Esophagus muscularis mucosa (tissue), 4 donors: ENCODE measurements at regions of chr1 and their contacts with region 1.

Region 1: DNA sequence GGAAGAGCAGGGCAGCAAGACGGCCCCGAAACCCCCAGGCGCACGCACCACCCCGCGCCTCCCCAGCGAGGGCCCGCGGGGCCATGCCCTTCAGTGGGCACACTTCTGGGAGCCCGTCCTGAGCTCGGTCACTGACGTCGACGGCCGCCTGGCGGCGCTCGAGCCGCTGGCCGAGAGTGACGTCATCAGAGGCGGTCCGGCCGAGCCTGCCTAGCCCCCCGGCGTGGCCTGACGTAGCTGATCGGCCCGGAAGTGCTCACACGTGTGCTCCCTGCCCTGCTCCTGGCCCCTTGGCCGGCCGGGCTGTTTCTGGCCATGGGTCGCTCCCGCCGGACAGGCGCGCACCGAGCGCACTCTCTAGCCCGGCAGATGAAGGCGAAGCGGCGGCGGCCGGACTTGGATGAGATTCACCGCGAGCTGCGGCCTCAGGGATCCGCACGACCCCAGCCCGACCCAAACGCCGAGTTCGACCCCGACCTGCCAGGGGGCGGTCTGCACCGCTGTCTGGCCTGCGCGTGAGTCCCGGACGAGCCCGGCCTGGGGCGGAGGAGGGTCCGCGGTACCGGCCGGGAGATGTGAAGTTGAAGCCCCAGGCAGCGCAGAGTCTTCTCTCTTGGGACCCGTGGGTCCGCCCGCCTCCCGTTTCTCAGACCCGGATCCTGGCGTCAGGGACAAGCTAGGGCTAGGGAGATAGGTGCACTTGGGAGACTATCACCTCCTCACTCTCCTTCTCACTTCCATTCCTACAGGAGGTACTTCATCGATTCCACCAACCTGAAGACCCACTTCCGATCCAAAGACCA is at the start of gene ZNF593:
- DNase-seq: peak; percentile 97
- H3K4me3 ChIP-seq: peak within 1 kb of the TSS; percentile 74 to 97 (median 91)
- H3K27ac ChIP-seq: peak within 1 kb of the TSS; percentile 77 to 89 (median 77)
- H3K4me1 ChIP-seq: peaks cover 20 to 28% (median 24%) of the 10 kb centered on the region in 4 donors
- H3K27me3 ChIP-seq: no peaks in the 10 kb centered on the region
- CTCF ChIP-seq: peak; percentile 87 to 93 (median 92)
- EP300 ChIP-seq: no peak
- POLR2A ChIP-seq: peak; percentile 66
- total RNA-seq, gene ZNF593: 10.4 to 41.6 (median 22.5) TPM

Region 2: GRCh38 chr1:26233903-26234643 is 64.2 kb after region 1 on chr1 and contains the start of gene CEP85:
- intact Hi-C with region 1: loop called (anchors 2 kb)
- DNase-seq: peak; percentile 99
- H3K4me3 ChIP-seq: peak within 1 kb of the TSS; percentile 69 to 73 (median 72)
- H3K27ac ChIP-seq: peak within 1 kb of the TSS; percentile 86 to 93 (median 92)
- H3K4me1 ChIP-seq: peaks cover 0 to 22% (median 17%) of the 10 kb centered on the region in 4 donors
- H3K27me3 ChIP-seq: no peaks in the 10 kb centered on the region
- CTCF ChIP-seq: peak; percentile 74 to 91 (median 85)
- EP300 ChIP-seq: no peak
- POLR2A ChIP-seq: no peak
- total RNA-seq, gene CEP85: 3.0 to 6.3 (median 4.8) TPM

Region 3: GRCh38 chr1:26417111-26417759 is 247.4 kb after region 1 on chr1:
- intact Hi-C with region 1: no loop called
- DNase-seq: no peak
- H3K4me3 ChIP-seq: no peak overlapping the region
- H3K27ac ChIP-seq: no peak overlapping the region
- H3K4me1 ChIP-seq: no peaks in the 10 kb centered on the region
- H3K27me3 ChIP-seq: peaks cover 0 to 68% (median 15%) of the 10 kb centered on the region in 4 donors
- CTCF ChIP-seq: peak; percentile 46 to 80 (median 68)
- EP300 ChIP-seq: no peak
- POLR2A ChIP-seq: no peak